ENCODE measurements at regions of chr13 and their contacts with region 1.

Region 1: DNA sequence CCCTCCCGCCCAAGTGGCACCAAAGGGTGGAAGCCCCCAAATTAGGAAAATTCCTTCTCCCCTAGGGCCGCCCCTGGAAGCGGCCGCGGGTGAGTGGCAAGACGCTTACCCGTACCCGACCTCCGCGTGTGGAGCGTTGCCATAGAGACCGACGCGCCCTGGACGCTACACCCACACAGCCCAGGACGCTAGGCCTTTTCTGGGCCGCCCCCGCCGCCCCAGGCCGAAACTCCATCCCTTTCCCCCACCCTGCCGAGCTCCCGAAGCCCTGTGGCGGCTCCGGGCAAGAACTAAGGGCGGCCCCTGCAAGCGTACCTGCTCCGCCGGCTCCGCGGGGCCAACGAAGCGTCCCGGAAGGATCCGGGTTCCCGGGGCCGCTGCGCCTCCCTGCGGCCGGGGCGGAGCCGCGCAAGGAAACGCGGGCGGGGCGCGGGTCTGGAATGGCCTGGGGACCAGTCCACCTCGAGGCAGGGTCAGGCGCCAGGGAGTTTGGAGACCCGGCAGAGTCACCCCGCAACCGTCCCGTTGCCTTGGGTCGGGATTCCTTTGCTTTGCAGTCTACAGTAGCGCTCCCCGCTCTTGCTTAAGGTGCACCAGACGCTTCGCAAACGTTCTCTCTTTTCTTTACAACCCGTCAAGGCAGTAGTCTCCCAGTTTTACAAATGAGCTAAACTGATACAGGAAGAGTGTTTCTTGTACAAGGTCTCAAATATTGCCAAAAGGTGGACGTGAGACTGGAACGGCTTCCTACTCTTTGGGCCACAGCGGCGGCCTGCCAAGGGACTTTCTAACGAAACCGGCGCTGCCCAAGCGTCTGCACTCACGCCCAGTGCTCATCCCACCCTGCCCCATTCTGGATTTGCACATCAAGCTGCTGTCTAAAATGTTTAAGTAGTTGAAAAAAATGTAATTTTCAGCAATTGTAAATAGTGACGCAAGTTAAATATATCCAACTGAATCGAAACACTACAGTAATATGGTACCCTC is at the start of gene NEK5:
- DNase-seq: peak; percentile 74 to 86 (median 75)
- ATAC-seq: peak; percentile 93
- H3K4me3 ChIP-seq: peak within 1 kb of the TSS; percentile 14
- H3K4me1 ChIP-seq: peaks cover 8% of the 10 kb centered on the region
- CTCF ChIP-seq: peak; percentile 61
- total RNA-seq, gene NEK5: 0.14 to 0.32 (median 0.29) TPM

Region 2: GRCh38 chr13:51452361-51453206 is 676.4 kb before region 1 on chr13 and contains the start of gene INTS6:
- intact Hi-C with region 1: no loop called
- DNase-seq: peak; percentile 99
- ATAC-seq: peak; percentile 86
- H3K4me3 ChIP-seq: peak within 1 kb of the TSS; percentile 89
- H3K4me1 ChIP-seq: peaks cover 13% of the 10 kb centered on the region
- CTCF ChIP-seq: no peak
- total RNA-seq, gene INTS6: 32.0 to 38.4 (median 36.3) TPM

Region 3: DNA sequence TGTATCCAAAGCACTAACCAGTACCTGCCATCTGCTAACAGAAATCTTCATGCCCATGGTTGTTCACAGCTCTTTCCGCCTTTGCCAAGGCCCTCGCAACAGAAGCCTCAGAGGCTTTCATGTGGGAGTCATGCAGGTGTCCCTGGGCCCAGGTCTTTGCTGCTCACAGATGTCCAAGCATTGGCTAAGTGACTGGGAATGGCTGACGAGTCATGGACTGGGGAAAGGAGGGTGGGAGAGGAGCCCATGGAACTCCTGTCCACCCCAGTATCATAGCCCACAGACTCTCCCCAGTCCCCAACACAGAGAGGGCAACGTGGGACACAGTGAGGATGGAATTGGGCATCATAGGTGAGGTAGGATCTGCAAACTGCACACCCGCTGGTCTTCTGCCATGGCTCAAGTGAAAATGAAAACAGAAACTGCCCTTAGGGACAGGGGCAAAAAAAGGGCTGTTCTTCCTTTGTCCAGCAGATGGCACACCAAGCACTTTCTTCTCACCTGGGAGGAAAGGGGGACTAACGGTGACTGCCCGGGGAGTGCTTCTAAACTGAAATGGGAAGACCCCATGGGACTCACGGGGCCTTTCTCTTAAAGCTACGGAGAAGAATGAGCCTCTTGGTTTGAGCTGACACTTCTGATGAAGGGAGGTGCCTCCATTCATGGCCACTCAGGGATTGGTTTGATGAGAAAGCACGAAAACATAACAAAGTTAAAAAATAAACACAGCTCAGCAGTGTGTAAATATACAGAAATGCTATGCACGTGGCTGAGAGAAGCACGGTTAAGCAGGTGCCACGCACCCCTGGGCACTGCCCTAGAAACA is 314.0 kb before region 1 on chr13:
- intact Hi-C with region 1: loop called (anchors 10 kb)
- DNase-seq: peak in 2 of 3 donors; percentile 60 to 87
- ATAC-seq: peak; percentile 91
- H3K4me3 ChIP-seq: no peak overlapping the region
- H3K4me1 ChIP-seq: no peaks in the 10 kb centered on the region
- CTCF ChIP-seq: peak; percentile 50

Region 4: GRCh38 chr13:51895906-51896888 is 232.8 kb before region 1 on chr13:
- intact Hi-C with region 1: loop called in 1 of 2 experiments (anchors 10 kb)
- DNase-seq: peak in 2 of 3 donors; percentile 63 to 77
- ATAC-seq: peak; percentile 87
- H3K4me3 ChIP-seq: no peak overlapping the region
- H3K4me1 ChIP-seq: no peaks in the 10 kb centered on the region
- CTCF ChIP-seq: peak; percentile 38

Region 5: DNA sequence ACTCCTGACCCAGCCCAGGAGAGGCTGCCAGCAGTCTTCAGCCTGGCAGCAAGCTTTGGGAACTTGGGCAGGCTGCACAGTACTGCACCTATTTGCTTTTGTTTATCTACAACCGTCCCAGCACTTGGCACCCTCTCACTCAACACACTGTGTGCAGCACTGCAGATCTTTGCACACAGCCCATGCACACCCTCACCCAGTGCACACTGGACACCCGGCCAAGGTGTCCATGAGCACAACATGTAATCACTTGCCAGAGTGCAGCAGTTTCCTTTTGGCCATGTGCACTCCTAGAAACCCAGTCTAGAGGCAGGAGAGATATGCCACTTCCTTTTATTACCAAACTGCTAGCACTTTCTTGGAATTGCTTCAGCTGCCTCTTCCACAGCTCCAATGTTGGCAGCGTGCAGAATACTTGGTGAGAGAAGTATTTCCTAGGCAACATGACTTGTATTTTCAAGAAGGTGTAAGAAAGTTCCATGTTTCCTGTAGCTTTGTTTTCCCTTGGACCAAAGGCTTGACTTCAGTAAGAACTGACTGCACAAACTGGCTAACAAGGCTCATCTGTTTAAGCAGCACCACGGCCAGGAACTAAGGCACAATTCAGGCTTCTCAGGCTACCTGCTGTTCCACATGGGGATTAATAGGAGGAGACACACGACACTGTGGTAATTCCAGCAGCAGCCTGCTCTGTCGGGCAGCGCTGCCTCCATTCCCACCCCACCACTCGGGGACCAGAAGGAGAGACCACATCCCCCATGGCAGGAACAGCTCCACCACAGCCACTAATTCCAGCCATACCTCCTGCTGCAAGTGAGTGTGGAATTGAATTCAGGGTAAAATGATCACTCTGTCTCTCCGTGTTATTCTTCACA is 133.1 kb before region 1 on chr13:
- intact Hi-C with region 1: loop called (anchors 10 kb)
- DNase-seq: peak; percentile 59 to 70 (median 63)
- ATAC-seq: peak; percentile 89
- H3K4me3 ChIP-seq: no peak overlapping the region
- H3K4me1 ChIP-seq: peaks cover 16% of the 10 kb centered on the region
- CTCF ChIP-seq: no peak

Region 6: GRCh38 chr13:52001120-52001731 is 127.8 kb before region 1 on chr13:
- intact Hi-C with region 1: loop called (anchors 10 kb)
- DNase-seq: no peak
- ATAC-seq: peak; percentile 50
- H3K4me3 ChIP-seq: no peak overlapping the region
- H3K4me1 ChIP-seq: peaks cover 12% of the 10 kb centered on the region
- CTCF ChIP-seq: peak; percentile 37

Region 7: GRCh38 chr13:52345048-52345447 is 216.0 kb after region 1 on chr13:
- intact Hi-C with region 1: no loop called
- DNase-seq: no peak
- ATAC-seq: no peak
- H3K4me3 ChIP-seq: no peak overlapping the region
- H3K4me1 ChIP-seq: no peaks in the 10 kb centered on the region
- CTCF ChIP-seq: no peak